Naive thymus-derived CD4-positive, alpha-beta T cell (primary cell): ENCODE measurements at regions of chr3 and their contacts with region 1.

Region 1: GRCh38 chr3:118884748-118885206 is 149.9 kb downstream of the IGSF11 start:
- DNase-seq: peak; percentile 58 to 83 (median 76)
- ATAC-seq: peak; percentile 88
- H3K4me3 ChIP-seq: no peak overlapping the region
- H3K4me3 Mint-ChIP-seq: peak overlapping the region in 5 of 10 donors; percentile 21 to 63 (median 40)
- H3K27ac ChIP-seq: no peak overlapping the region
- H3K27ac Mint-ChIP-seq: no peak overlapping the region
- H3K4me1 ChIP-seq: no peaks in the 10 kb centered on the region
- H3K4me1 Mint-ChIP-seq: peaks cover 0 to 18% (median 7%) of the 10 kb centered on the region in 7 donors
- H3K27me3 ChIP-seq: no peaks in the 10 kb centered on the region
- H3K27me3 Mint-ChIP-seq: peaks cover 8 to 16% (median 11%) of the 10 kb centered on the region in 5 donors

Region 2: GRCh38 chr3:118900737-118901525 is 16.2 kb after region 1 on chr3:
- CTCF ChIA-PET with region 1: no interaction called
- POLR2A ChIA-PET with region 1: no interaction called
- intact Hi-C with region 1: no loop called
- DNase-seq: no peak
- ATAC-seq: no peak
- H3K4me3 ChIP-seq: no peak overlapping the region
- H3K4me3 Mint-ChIP-seq: no peak overlapping the region
- H3K27ac ChIP-seq: no peak overlapping the region
- H3K27ac Mint-ChIP-seq: no peak overlapping the region
- H3K4me1 ChIP-seq: no peaks in the 10 kb centered on the region
- H3K4me1 Mint-ChIP-seq: peaks cover 0 to 8% (median 0%) of the 10 kb centered on the region in 7 donors
- H3K27me3 ChIP-seq: no peaks in the 10 kb centered on the region
- H3K27me3 Mint-ChIP-seq: peaks cover 0 to 20% (median 2%) of the 10 kb centered on the region in 5 donors

Region 3: GRCh38 chr3:118960876-118961450 is 76.2 kb after region 1 on chr3:
- CTCF ChIA-PET with region 1: interaction called, 23 read pairs
- POLR2A ChIA-PET with region 1: no interaction called
- intact Hi-C with region 1: loop called in 1 of 2 experiments (anchors 1 kb)
- DNase-seq: no peak
- ATAC-seq: no peak
- H3K4me3 ChIP-seq: no peak overlapping the region
- H3K4me3 Mint-ChIP-seq: no peak overlapping the region
- H3K27ac ChIP-seq: no peak overlapping the region
- H3K27ac Mint-ChIP-seq: no peak overlapping the region
- H3K4me1 ChIP-seq: peaks cover 9 to 19% of the 10 kb centered on the region in 2 donors
- H3K4me1 Mint-ChIP-seq: peaks cover 13 to 34% (median 29%) of the 10 kb centered on the region in 7 donors
- H3K27me3 ChIP-seq: no peaks in the 10 kb centered on the region
- H3K27me3 Mint-ChIP-seq: peaks cover 0 to 25% (median 4%) of the 10 kb centered on the region in 5 donors

Region 4: GRCh38 chr3:119034256-119035013 is 149.7 kb after region 1 on chr3 and contains the start of gene IGSF11:
- CTCF ChIA-PET with region 1: interaction called, 370 read pairs
- POLR2A ChIA-PET with region 1: interaction called, 15 read pairs
- intact Hi-C with region 1: loop called (anchors 1 kb)
- DNase-seq: peak; percentile 52 to 79 (median 68)
- ATAC-seq: peak; percentile 93
- H3K4me3 ChIP-seq: peak within 1 kb of the TSS; percentile 62
- H3K4me3 Mint-ChIP-seq: peak within 1 kb of the TSS; percentile 83 to 93 (median 90)
- H3K27ac ChIP-seq: no peak within 1 kb of the TSS
- H3K27ac Mint-ChIP-seq: peak within 1 kb of the TSS in 3 of 9 donors; percentile 46 to 81 (median 58)
- H3K4me1 ChIP-seq: no peaks in the 10 kb centered on the region
- H3K4me1 Mint-ChIP-seq: peaks cover 0 to 17% (median 10%) of the 10 kb centered on the region in 7 donors
- H3K27me3 ChIP-seq: peaks cover 5 to 7% of the 10 kb centered on the region in 2 donors
- H3K27me3 Mint-ChIP-seq: peaks cover 34 to 64% (median 48%) of the 10 kb centered on the region in 5 donors
- total RNA-seq, gene IGSF11: 0.15 to 0.85 (median 0.49) TPM in 4 of 5 experiments, not detected in the other

Region 5: GRCh38 chr3:119098619-119099222 is 213.9 kb after region 1 on chr3:
- CTCF ChIA-PET with region 1: interaction called, 224 read pairs
- POLR2A ChIA-PET with region 1: no interaction called
- intact Hi-C with region 1: loop called (anchors 1 kb)
- DNase-seq: peak in 7 of 9 donors; percentile 24 to 65 (median 54)
- ATAC-seq: peak; percentile 50
- H3K4me3 ChIP-seq: no peak overlapping the region
- H3K4me3 Mint-ChIP-seq: no peak overlapping the region
- H3K27ac ChIP-seq: no peak overlapping the region
- H3K27ac Mint-ChIP-seq: no peak overlapping the region
- H3K4me1 ChIP-seq: no peaks in the 10 kb centered on the region
- H3K4me1 Mint-ChIP-seq: peaks cover 0 to 1% (median 0%) of the 10 kb centered on the region in 7 donors
- H3K27me3 ChIP-seq: no peaks in the 10 kb centered on the region
- H3K27me3 Mint-ChIP-seq: peaks cover 0 to 4% (median 0%) of the 10 kb centered on the region in 5 donors

Region 6: GRCh38 chr3:119559441-119559963 is 674.7 kb after region 1 on chr3 and contains the start of gene CD80:
- CTCF ChIA-PET with region 1: no interaction called
- POLR2A ChIA-PET with region 1: no interaction called
- intact Hi-C with region 1: loop called in 1 of 2 experiments (anchors 2 kb)
- DNase-seq: peak in 7 of 9 donors; percentile 14 to 63 (median 33)
- ATAC-seq: peak; percentile 76
- H3K4me3 ChIP-seq: no peak within 1 kb of the TSS
- H3K4me3 Mint-ChIP-seq: peak within 1 kb of the TSS in 2 of 10 donors; percentile 12 to 81
- H3K27ac ChIP-seq: no peak within 1 kb of the TSS
- H3K27ac Mint-ChIP-seq: peak within 1 kb of the TSS in 2 of 9 donors; percentile 68 to 71
- H3K4me1 ChIP-seq: peaks cover 0 to 6% of the 10 kb centered on the region in 2 donors
- H3K4me1 Mint-ChIP-seq: peaks cover 0 to 64% (median 8%) of the 10 kb centered on the region in 7 donors
- H3K27me3 ChIP-seq: no peaks in the 10 kb centered on the region
- H3K27me3 Mint-ChIP-seq: peaks cover 0 to 5% (median 0%) of the 10 kb centered on the region in 5 donors
- total RNA-seq, gene CD80: 0.13 to 15.1 (median 1.2) TPM in 3 of 5 experiments, not detected in the others